Colonic mucosa (tissue), 4 donors: ENCODE measurements at regions of chr3 and their contacts with region 1.

Region 1: GRCh38 chr3:113736548-113737089 is 9.4 kb downstream of the NAA50 start:
- DNase-seq: no peak
- H3K4me3 ChIP-seq: no peak overlapping the region
- H3K27ac ChIP-seq: no peak overlapping the region
- H3K4me1 ChIP-seq: no peaks in the 10 kb centered on the region
- H3K27me3 ChIP-seq: no peaks in the 10 kb centered on the region
- CTCF ChIP-seq: peak; percentile 50

Region 2: DNA sequence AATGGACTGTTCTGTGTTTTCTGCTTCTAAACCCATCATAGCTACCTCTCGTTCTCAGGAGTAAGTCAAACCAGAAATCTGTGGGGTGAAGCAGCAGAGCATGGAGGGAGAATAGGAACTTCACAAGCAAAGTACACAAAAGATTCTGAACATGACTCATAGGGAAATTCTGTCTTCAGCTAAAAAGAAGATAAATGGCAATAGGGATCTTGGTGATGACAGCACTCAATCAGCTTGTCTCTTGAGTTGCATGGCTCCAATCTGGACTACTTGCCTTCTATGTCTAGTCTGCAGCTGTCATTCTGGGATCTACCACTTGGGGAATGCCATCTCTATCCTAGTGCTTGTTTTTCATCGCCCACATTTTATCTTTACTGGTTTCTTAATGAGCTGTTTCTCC is 88.5 kb after region 1 on chr3:
- intact Hi-C with region 1: no loop called
- DNase-seq: no peak
- H3K4me3 ChIP-seq: no peak overlapping the region
- H3K27ac ChIP-seq: no peak overlapping the region
- H3K4me1 ChIP-seq: no peaks in the 10 kb centered on the region
- H3K27me3 ChIP-seq: no peaks in the 10 kb centered on the region
- CTCF ChIP-seq: no peak

Region 3: DNA sequence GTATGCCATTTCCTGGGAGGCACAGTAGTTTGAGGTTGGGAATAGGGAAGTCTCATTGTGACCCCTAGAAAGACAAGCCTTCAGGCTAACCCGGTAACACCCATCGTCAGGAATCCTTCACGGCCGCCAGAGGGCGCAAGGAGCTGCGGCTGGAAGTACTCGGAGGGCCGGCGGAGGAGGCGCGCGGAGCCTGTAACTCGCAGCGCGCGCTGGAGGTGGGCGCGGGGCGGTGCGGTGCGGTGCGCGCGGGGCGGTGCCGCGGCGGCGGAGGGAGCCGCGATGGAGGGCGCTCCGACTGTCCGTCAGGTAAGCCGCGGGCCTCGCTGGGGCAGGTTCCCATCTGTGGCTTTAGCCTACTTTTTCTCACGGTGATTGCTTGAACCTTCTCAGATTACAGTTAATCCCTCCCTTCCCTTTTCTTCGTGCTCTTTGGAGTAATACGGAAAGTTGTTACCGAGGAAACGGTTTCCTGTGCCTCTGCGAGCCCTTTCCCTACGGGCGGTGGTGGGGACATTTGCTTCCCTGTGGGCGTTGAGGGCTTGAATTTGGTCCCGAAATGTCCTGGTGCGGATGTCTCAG is 102.1 kb after region 1 on chr3 and contains the start of gene GRAMD1C:
- intact Hi-C with region 1: loop called (anchors 5 kb)
- DNase-seq: peak; percentile 85
- H3K4me3 ChIP-seq: peak within 1 kb of the TSS; percentile 49
- H3K27ac ChIP-seq: no peak within 1 kb of the TSS
- H3K4me1 ChIP-seq: no peaks in the 10 kb centered on the region
- H3K27me3 ChIP-seq: no peaks in the 10 kb centered on the region
- CTCF ChIP-seq: peak; percentile 86
- total RNA-seq, gene GRAMD1C: 4.1 to 10.2 TPM

Region 4: DNA sequence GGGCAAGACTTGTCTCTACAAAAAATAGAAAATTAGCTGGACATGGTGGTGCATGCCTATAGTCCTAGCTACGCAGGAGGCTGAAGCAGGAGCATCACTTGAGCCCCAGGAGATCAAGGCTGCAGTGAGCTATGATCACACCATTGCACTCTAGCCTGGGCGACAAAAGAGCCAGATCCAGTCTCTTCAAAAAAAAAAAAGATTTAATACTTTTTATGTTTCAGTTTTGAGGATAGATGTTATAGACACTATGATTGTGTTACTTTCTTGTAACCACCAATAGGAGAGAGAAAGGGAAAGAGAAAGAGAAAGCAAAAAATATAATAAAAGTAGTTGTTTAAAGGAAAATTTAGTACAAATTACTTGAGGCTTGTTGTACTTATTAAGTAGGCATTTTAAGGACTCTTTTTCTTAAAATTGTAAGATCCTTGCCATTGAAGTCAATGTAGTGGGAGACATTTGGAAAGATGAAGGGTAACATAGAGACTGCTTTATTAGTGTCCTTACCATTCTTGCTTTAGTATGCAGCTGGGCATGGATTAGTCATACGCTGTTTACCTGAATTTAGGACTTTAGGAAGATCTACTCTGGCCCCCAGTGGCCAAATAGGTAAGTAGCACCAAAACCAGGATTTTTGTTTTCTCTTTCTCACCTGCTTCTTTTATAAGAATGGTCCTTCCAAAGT is 176.1 kb after region 1 on chr3:
- intact Hi-C with region 1: loop called (anchors 10 kb)
- DNase-seq: peak; percentile 47
- H3K4me3 ChIP-seq: no peak overlapping the region
- H3K27ac ChIP-seq: no peak overlapping the region
- H3K4me1 ChIP-seq: no peaks in the 10 kb centered on the region
- H3K27me3 ChIP-seq: no peaks in the 10 kb centered on the region
- CTCF ChIP-seq: peak; percentile 46